Mammary epithelial cell (primary cell): ENCODE measurements at regions of chr3 and their contacts with region 1.

Region 1: GRCh38 chr3:27368831-27369607 is at the start of gene NEK10:
- DNase-seq: peak; percentile 83
- H3K4me3 ChIP-seq: peak within 1 kb of the TSS; percentile 16 to 57 (median 44)
- H3K27ac ChIP-seq: no peak within 1 kb of the TSS
- H3K4me1 ChIP-seq: no peaks in the 10 kb centered on the region
- H3K27me3 ChIP-seq: no peaks in the 10 kb centered on the region
- CTCF ChIP-seq: no peak
- total RNA-seq, gene NEK10: 2.7 to 5.1 TPM

Region 2: GRCh38 chr3:26931896-26932295 is 437.1 kb before region 1 on chr3:
- CTCF ChIA-PET with region 1: no interaction called
- dilution Hi-C with region 1: no loop called
- in situ Hi-C with region 1: no loop called
- intact Hi-C with region 1: no loop called
- DNase-seq: no peak
- H3K4me3 ChIP-seq: no peak overlapping the region
- H3K27ac ChIP-seq: no peak overlapping the region
- H3K4me1 ChIP-seq: no peaks in the 10 kb centered on the region
- H3K27me3 ChIP-seq: no peaks in the 10 kb centered on the region
- CTCF ChIP-seq: no peak

Region 3: DNA sequence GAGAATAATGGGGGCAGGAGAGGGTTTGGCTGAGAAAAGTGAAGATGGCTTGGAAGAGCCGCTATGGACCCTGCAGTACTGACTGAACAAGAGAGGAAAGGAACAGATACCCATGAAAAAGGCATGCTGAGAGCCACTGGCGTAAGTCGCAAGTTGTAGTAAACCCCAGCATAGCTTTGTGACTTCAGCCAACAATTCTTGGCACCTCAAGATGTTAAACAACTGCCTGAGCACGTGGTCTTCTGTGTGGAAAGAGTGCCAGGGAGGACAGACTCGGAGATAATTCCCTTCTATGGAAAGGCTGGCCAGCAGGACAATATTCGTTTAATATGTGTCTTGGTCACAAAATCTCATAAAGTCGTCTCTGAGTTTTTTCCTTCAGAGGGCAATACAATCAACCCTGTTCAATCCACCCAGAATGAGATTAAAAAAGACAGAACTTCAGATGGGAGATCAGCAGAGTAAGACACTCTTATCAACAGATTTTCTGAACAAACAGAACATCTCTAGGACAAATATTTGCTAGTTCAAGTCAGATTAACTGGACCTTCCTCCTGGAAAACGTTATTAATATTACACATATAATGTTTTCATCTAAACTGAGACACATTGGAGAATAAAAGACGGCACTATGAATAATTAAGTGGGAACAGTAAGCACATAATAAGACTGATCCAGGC is 49.0 kb before region 1 on chr3:
- CTCF ChIA-PET with region 1: no interaction called
- dilution Hi-C with region 1: loop called (anchors 5 kb)
- in situ Hi-C with region 1: no loop called
- intact Hi-C with region 1: no loop called
- DNase-seq: no peak
- H3K4me3 ChIP-seq: no peak overlapping the region
- H3K27ac ChIP-seq: no peak overlapping the region
- H3K4me1 ChIP-seq: peaks cover 12% of the 10 kb centered on the region
- H3K27me3 ChIP-seq: no peaks in the 10 kb centered on the region
- CTCF ChIP-seq: no peak

Region 4: GRCh38 chr3:27666708-27667107 is 297.7 kb after region 1 on chr3:
- CTCF ChIA-PET with region 1: no interaction called
- dilution Hi-C with region 1: no loop called
- in situ Hi-C with region 1: no loop called
- intact Hi-C with region 1: no loop called
- DNase-seq: no peak
- H3K4me3 ChIP-seq: no peak overlapping the region
- H3K27ac ChIP-seq: no peak overlapping the region
- H3K4me1 ChIP-seq: peaks cover 3% of the 10 kb centered on the region
- H3K27me3 ChIP-seq: no peaks in the 10 kb centered on the region
- CTCF ChIP-seq: no peak